Activated CD4-positive, alpha-beta T cell treated with anti-CD3 and anti-CD28 coated beads, Interleukin-2, amount 10 ng/mL, durations not matched to agents 7 days and 5 days (primary cell): ENCODE measurements at regions of chr11 and their contacts with region 1.

Region 1: GRCh38 chr11:65888163-65888814 is at the start of gene FIBP:
- DNase-seq: peak; percentile 98
- H3K4me3 Mint-ChIP-seq: peak within 1 kb of the TSS; percentile 90
- H3K27ac Mint-ChIP-seq: peak within 1 kb of the TSS; percentile 93
- H3K4me1 Mint-ChIP-seq: peaks cover 70% of the 10 kb centered on the region
- H3K27me3 Mint-ChIP-seq: no peaks in the 10 kb centered on the region
- total RNA-seq, gene FIBP: 94.7 to 112 TPM

Region 2: DNA sequence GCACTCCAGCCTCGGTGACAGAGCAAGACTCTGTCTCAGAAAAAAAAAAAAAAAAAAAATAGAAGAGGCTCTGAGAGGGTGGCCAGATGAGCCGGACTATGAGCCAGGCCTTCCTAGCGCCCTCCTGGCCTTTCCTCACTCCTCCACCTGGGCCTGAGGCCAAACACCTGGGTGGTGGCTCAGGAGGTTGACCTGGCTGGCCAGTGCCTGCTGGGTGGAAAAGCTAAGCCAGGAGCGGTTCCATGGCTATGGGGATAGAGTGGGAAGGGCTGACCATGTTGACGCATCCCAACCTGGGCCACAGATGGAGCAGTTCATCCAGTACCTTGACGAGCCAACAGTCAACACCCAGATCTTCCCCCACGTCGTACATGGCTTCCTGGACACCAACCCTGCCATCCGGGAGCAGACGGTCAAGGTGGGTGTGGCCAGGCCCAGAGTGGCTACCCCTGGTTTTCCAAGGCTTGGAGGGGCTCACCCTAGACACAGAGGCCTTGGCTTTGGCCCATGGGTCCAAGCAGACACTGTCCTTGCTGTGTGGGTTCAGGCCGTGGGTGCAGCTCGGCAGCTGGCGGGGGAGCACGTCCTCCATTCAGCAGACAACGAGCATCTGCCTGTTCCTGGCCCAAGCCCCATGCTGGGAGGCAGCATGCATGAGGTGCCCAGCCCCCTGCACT is 355.8 kb before region 1 on chr11:
- CTCF ChIA-PET with region 1: no interaction called
- POLR2A ChIA-PET with region 1: no interaction called
- DNase-seq: no peak
- H3K4me3 Mint-ChIP-seq: no peak overlapping the region
- H3K27ac Mint-ChIP-seq: peak overlapping the region; percentile 5
- H3K4me1 Mint-ChIP-seq: peaks cover 24% of the 10 kb centered on the region
- H3K27me3 Mint-ChIP-seq: no peaks in the 10 kb centered on the region

Region 3: GRCh38 chr11:65779851-65780577 is 108.3 kb before region 1 on chr11:
- CTCF ChIA-PET with region 1: interaction called, 17 read pairs
- POLR2A ChIA-PET with region 1: no interaction called
- DNase-seq: peak; percentile 82
- H3K4me3 Mint-ChIP-seq: peak overlapping the region; percentile 84
- H3K27ac Mint-ChIP-seq: peak overlapping the region; percentile 90
- H3K4me1 Mint-ChIP-seq: peaks cover 12% of the 10 kb centered on the region
- H3K27me3 Mint-ChIP-seq: peaks cover 17% of the 10 kb centered on the region

Region 4: GRCh38 chr11:65850831-65851811 is 37.2 kb before region 1 on chr11:
- CTCF ChIA-PET with region 1: interaction called, 26 read pairs
- POLR2A ChIA-PET with region 1: no interaction called
- DNase-seq: no peak
- H3K4me3 Mint-ChIP-seq: no peak overlapping the region
- H3K27ac Mint-ChIP-seq: peak overlapping the region; percentile 55
- H3K4me1 Mint-ChIP-seq: peaks cover 26% of the 10 kb centered on the region
- H3K27me3 Mint-ChIP-seq: no peaks in the 10 kb centered on the region

Region 5: DNA sequence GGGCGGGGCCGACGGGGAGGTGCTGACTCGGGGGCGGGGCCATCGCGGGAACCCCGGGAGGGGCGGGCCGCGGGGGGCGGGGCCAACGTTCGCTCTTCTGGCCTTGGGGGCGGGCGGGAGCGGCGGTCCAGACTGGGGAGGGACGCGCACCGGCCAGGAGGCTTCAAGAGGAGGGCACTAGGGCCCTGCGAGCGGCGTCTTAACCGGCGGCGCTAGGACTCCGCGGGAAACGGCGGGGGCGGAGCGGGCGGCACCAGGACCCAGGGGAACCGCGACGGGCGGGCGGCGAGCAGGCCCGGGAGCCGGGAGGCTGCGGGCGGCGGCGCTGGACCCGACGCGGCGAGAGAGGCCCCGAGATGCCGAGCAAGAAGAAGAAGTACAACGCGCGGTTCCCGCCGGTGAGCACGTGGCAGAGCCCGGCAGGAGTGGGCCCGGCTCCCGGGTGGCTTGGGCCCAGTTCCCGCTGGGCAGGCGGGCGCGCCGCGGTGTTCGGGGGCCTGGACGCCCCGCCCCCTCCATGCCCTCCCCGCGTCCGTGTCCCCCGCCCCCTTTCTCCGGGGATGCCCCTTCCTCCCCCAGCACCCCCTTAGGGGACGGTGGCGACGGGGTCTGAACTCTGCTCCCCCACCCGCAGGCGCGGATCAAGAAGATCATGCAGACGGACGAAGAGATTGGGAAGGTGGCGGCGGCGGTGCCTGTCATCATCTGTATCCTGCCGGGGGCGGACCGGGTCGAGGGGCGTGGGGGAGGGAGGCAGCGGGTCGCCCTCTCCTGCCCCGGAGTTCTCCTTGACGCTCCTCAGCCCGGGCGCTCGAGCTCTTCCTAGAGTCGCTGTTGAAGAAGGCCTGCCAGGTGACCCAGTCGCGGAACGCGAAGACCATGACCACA is 31.1 kb after region 1 on chr11 and contains the start of gene DRAP1:
- CTCF ChIA-PET with region 1: interaction called, 340 read pairs
- POLR2A ChIA-PET with region 1: no interaction called
- DNase-seq: peak; percentile 98
- H3K4me3 Mint-ChIP-seq: peak within 1 kb of the TSS; percentile 95
- H3K27ac Mint-ChIP-seq: peak within 1 kb of the TSS; percentile 90
- H3K4me1 Mint-ChIP-seq: peaks cover 53% of the 10 kb centered on the region
- H3K27me3 Mint-ChIP-seq: no peaks in the 10 kb centered on the region
- total RNA-seq, gene DRAP1: 190 to 218 TPM

Region 6: DNA sequence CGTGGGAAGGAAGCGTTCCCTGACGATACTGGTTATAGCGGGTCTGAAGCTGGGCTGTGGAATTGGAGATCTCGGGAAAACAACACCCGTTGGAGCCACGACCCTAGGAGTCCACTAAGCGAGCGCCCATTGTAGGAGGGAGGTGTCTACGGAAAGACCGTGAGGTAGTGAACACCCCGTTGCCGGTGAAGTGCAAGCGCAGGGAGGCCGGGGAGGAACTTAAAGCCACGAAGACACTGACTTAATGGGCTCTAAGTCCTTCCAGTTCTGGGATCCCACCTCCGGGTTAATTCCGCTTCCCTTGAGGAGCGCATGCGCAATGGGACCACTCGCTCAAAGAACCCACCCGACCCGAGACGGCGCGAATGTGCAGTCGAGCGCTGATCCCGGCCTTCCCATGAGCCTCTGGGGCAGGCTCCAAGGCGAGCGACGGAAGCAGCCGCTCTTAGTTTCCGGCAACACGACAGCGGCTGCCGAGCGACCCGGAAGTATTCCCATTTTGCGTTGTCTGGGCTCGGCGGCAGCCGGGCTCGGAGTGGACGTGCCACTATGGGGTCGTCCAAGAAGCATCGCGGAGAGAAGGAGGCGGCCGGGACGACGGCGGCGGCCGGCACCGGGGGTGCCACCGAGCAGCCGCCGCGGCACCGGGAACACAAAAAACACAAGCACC is 73.1 kb after region 1 on chr11 and contains the start of gene SART1:
- CTCF ChIA-PET with region 1: interaction called, 40 read pairs
- POLR2A ChIA-PET with region 1: no interaction called
- DNase-seq: peak; percentile 97
- H3K4me3 Mint-ChIP-seq: peak within 1 kb of the TSS; percentile 93
- H3K27ac Mint-ChIP-seq: peak within 1 kb of the TSS; percentile 96
- H3K4me1 Mint-ChIP-seq: peaks cover 52% of the 10 kb centered on the region
- H3K27me3 Mint-ChIP-seq: no peaks in the 10 kb centered on the region
- total RNA-seq, gene SART1: 79.6 to 81.7 TPM

Region 7: DNA sequence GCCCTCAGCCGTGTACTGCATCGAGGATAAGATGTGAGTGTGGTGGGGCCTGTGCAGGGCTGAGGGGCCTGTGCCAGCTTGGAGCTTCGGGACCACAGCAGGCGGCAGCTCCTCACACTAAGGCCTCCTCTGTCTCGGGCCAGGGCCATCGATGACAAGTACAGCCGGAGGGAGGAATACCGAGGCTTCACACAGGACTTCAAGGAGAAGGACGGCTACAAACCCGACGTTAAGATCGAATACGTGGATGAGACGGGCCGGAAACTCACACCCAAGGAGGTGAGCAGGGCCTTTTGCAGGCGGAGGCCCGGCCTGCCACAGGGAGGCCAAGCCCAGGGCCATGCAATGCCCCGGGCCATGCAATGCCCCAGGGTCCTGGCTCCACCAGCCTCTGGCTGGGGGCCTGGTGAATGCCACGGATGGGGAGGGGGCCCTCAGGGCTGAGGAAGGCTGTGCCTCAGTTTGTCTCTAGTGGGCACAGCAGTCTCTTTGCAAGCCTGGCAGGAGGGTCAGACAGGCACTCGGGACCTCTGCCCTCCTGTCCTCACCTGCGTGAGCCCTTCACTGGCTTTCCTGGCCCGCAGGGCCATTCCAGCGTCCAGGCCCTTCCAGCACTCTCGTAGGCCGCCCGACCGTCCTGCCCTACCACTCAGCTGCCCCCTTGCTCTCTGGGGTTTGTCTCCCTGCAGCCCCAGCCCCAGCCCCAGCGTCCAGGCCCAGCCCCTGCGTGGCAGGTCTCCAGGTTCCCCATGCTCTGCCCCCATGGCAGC is 89.5 kb after region 1 on chr11:
- CTCF ChIA-PET with region 1: interaction called, 11 read pairs
- POLR2A ChIA-PET with region 1: no interaction called
- DNase-seq: no peak
- H3K4me3 Mint-ChIP-seq: no peak overlapping the region
- H3K27ac Mint-ChIP-seq: no peak overlapping the region
- H3K4me1 Mint-ChIP-seq: peaks cover 1% of the 10 kb centered on the region
- H3K27me3 Mint-ChIP-seq: no peaks in the 10 kb centered on the region

Region 8: GRCh38 chr11:66045177-66045639 is 156.9 kb after region 1 on chr11:
- CTCF ChIA-PET with region 1: interaction called, 10 read pairs
- POLR2A ChIA-PET with region 1: no interaction called
- DNase-seq: peak; percentile 87
- H3K4me3 Mint-ChIP-seq: no peak overlapping the region
- H3K27ac Mint-ChIP-seq: no peak overlapping the region
- H3K4me1 Mint-ChIP-seq: peaks cover 20% of the 10 kb centered on the region
- H3K27me3 Mint-ChIP-seq: peaks cover 2% of the 10 kb centered on the region